ENCODE measurements at regions of chr3 and their contacts with region 1.

Region 1: DNA sequence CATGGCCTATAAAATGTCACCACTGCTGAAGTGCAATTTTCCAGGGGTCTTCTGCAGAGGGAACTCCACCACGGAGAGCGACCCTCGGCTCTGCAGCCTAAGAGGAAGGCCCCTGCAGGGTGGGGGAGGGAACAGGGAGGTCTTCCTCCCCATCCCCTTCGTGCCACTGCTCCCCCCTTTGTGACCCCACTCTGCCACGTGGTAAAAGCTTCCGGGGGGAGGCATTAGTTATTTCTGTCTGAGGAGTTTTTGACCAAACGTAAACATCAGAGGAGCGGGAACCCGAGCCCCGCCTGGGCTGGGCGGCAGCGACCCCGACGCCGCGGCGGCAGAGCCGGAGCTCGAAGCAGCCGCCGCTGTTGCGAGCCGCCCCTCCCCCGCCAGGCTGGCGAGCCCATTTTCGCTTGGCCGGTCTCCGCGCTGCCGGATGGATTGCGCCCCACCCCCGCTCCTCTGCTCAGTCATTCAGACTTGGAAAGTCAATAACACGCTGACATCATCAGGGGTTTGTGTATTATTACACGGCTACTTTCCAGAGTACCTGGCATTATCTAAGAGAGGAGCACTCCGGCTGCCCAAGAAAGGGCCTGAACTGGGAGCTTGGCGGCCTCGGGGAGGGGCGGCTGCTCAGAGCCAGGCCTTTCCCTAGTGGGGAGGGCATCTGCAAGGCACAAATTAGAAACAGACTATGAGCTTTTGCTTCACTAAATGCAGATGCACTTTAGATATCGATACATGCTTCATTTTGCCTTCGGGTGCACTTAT is 162.5 kb upstream of the TBL1XR1 start:
- DNase-seq: peak; percentile 90 to 97 (median 95)
- H3K4me3 ChIP-seq: peak overlapping the region; percentile 79
- H3K4me3 Mint-ChIP-seq: peak overlapping the region; percentile 90 to 98 (median 93)
- H3K27ac ChIP-seq: peak overlapping the region; percentile 87
- H3K27ac Mint-ChIP-seq: peak overlapping the region; percentile 96 to 100 (median 99)
- H3K4me1 ChIP-seq: peaks cover 41% of the 10 kb centered on the region
- H3K4me1 Mint-ChIP-seq: peaks cover 47 to 58% (median 58%) of the 10 kb centered on the region in 3 donors
- H3K27me3 ChIP-seq: no peaks in the 10 kb centered on the region
- H3K27me3 Mint-ChIP-seq: peaks cover 0 to 17% of the 10 kb centered on the region in 2 donors

Region 2: DNA sequence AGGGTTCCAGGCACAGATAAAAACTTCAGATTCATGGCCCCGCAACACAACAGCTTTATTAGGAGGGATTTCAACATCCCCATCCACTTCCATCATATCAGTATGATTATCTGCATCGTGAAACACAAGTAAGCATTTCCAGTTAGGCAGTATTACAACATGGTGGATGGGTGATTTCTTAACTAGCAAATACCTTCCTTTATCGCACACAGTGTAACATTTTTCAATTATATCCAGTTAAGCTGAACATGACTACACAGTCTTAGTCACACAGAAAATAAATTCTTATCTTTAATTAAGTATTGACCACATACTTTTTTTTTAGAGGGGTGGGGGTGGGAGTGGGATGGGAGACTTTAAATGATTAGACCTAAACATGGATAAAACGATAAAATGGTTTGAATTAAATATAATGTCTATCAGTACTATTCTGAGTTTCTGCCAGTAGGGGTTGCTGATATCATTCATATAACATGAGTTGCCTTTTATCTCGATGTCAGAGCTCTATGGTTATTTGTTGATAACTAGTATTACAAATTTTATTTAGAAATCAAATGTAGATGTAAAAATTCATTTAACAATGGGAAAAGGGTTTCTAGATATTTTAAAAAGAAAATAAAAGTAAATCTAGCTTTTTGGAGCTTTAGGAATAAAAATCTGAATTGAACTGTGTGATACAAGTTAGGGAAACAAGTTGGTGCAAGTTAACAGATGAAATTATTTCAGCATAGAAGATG is 309.1 kb before region 1 on chr3:
- CTCF ChIA-PET with region 1: interaction called, 26 read pairs
- POLR2A ChIA-PET with region 1: interaction called, 9 read pairs
- DNase-seq: peak in 2 of 5 donors; percentile 41 to 51
- H3K4me3 ChIP-seq: no peak overlapping the region
- H3K4me3 Mint-ChIP-seq: no peak overlapping the region
- H3K27ac ChIP-seq: no peak overlapping the region
- H3K27ac Mint-ChIP-seq: peak overlapping the region in 2 of 8 donors; percentile 46 to 63
- H3K4me1 ChIP-seq: peaks cover 10% of the 10 kb centered on the region
- H3K4me1 Mint-ChIP-seq: peaks cover 12 to 27% (median 18%) of the 10 kb centered on the region in 3 donors
- H3K27me3 ChIP-seq: no peaks in the 10 kb centered on the region
- H3K27me3 Mint-ChIP-seq: no peaks in the 10 kb centered on the region

Region 3: DNA sequence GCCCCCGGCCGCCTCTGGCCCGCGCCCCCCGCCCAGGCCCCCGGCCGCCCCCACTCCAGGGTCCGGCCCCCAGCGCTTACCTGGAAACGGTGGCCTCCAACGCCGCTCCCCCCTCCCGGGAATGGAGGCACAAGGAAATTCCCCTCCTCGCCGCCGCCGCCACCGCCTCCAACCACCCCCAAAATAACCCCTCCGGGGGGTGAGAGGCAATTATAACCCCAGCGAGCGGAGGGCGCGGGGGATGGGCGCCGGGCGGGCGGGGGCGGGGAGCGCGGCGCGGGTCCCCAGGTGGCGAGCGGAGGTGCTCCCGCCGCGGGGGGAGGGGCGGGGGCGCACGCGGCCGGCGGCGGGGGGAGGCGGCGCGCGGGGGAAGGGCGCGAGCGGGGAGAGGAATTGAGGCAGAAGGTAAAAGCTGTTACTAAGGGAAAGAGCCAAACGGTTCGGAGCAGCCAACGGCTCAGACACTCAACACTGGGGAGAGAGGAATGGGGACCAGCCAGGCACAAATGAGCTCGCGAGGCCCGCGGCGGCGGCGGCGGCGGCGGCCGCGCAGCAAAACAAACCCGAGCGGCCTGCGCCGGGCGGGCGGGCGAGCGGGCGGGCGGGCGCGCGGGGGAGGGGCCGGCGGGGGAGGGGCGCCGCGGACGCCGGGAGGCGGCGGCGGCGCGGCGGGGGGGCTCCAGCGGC is 162.6 kb before region 1 on chr3 and contains the start of gene TBL1XR1:
- CTCF ChIA-PET with region 1: interaction called, 49 read pairs
- POLR2A ChIA-PET with region 1: interaction called, 213 read pairs
- DNase-seq: peak; percentile 82 to 94 (median 90)
- H3K4me3 ChIP-seq: peak within 1 kb of the TSS; percentile 92
- H3K4me3 Mint-ChIP-seq: peak within 1 kb of the TSS; percentile 92 to 99 (median 98)
- H3K27ac ChIP-seq: peak within 1 kb of the TSS; percentile 80
- H3K27ac Mint-ChIP-seq: peak within 1 kb of the TSS; percentile 90 to 99 (median 98)
- H3K4me1 ChIP-seq: peaks cover 60% of the 10 kb centered on the region
- H3K4me1 Mint-ChIP-seq: peaks cover 60 to 73% (median 70%) of the 10 kb centered on the region in 3 donors
- H3K27me3 ChIP-seq: no peaks in the 10 kb centered on the region
- H3K27me3 Mint-ChIP-seq: peaks cover 0 to 7% of the 10 kb centered on the region in 2 donors
- total RNA-seq, gene TBL1XR1: 173 to 193 TPM

Region 4: GRCh38 chr3:177597311-177598096 is 237.7 kb after region 1 on chr3:
- CTCF ChIA-PET with region 1: interaction called, 14 read pairs
- POLR2A ChIA-PET with region 1: interaction called, 3 read pairs
- DNase-seq: peak in 4 of 5 donors; percentile 16 to 62 (median 51)
- H3K4me3 ChIP-seq: peak overlapping the region; percentile 7
- H3K4me3 Mint-ChIP-seq: peak overlapping the region; percentile 4 to 78 (median 72)
- H3K27ac ChIP-seq: peak overlapping the region; percentile 33
- H3K27ac Mint-ChIP-seq: peak overlapping the region; percentile 75 to 97 (median 94)
- H3K4me1 ChIP-seq: peaks cover 59% of the 10 kb centered on the region
- H3K4me1 Mint-ChIP-seq: peaks cover 81 to 91% (median 88%) of the 10 kb centered on the region in 3 donors
- H3K27me3 ChIP-seq: no peaks in the 10 kb centered on the region
- H3K27me3 Mint-ChIP-seq: no peaks in the 10 kb centered on the region

Region 5: GRCh38 chr3:177646749-177647148 is 287.0 kb after region 1 on chr3:
- CTCF ChIA-PET with region 1: interaction called, 13 read pairs
- POLR2A ChIA-PET with region 1: interaction called, 5 read pairs
- DNase-seq: peak in 4 of 5 donors; percentile 14 to 60 (median 29)
- H3K4me3 ChIP-seq: no peak overlapping the region
- H3K4me3 Mint-ChIP-seq: peak overlapping the region in 6 of 7 donors; percentile 21 to 75 (median 42)
- H3K27ac ChIP-seq: no peak overlapping the region
- H3K27ac Mint-ChIP-seq: peak overlapping the region; percentile 69 to 96 (median 84)
- H3K4me1 ChIP-seq: peaks cover 69% of the 10 kb centered on the region
- H3K4me1 Mint-ChIP-seq: peaks cover 78 to 88% (median 86%) of the 10 kb centered on the region in 3 donors
- H3K27me3 ChIP-seq: no peaks in the 10 kb centered on the region
- H3K27me3 Mint-ChIP-seq: peaks cover 0 to 2% of the 10 kb centered on the region in 2 donors

Region 6: GRCh38 chr3:177665122-177665808 is 305.5 kb after region 1 on chr3:
- CTCF ChIA-PET with region 1: interaction called, 12 read pairs
- POLR2A ChIA-PET with region 1: no interaction called
- DNase-seq: no peak
- H3K4me3 ChIP-seq: no peak overlapping the region
- H3K4me3 Mint-ChIP-seq: no peak overlapping the region
- H3K27ac ChIP-seq: no peak overlapping the region
- H3K27ac Mint-ChIP-seq: no peak overlapping the region
- H3K4me1 ChIP-seq: no peaks in the 10 kb centered on the region
- H3K4me1 Mint-ChIP-seq: peaks cover 0 to 17% (median 11%) of the 10 kb centered on the region in 3 donors
- H3K27me3 ChIP-seq: no peaks in the 10 kb centered on the region
- H3K27me3 Mint-ChIP-seq: no peaks in the 10 kb centered on the region

Region 7: DNA sequence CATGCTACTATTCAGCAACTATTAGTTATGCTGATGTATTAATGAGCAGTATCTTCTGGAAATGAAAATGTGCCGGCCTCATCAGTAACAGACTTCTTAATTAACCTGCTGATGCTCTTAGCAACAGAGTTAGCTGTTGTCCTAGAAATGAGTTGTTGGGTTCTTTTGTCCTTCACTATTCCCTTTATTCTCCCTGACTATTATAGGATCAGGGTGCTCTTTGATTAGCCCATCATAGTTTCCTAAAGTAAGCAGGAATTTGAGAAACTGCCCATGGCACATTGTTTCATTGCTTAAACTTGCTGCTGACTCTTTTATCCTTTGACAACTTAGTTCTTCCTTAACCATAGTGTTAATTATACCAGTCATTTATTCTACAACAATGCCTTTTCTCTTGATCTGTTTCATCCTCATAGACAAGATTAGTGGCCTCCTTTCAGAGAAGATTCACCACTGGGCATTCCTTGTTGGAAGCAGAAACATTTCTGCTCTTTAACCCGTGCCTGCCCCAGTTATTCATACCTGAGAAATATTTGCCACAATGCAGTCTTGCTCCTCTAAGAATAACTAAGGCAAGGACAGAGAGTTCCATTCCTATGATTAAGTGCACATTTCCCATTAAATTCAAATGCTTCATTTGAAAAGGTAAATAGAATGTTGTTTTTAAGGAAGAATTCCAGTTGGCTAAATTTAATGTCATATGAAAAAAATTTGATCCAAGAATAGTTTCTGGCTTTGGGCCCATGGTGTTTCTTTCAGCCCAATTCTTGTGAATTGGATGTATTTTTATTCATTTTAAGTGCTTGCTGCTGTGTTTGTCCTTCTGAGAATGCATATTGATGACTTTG is 410.8 kb after region 1 on chr3:
- CTCF ChIA-PET with region 1: no interaction called
- POLR2A ChIA-PET with region 1: no interaction called
- DNase-seq: no peak
- H3K4me3 ChIP-seq: no peak overlapping the region
- H3K4me3 Mint-ChIP-seq: no peak overlapping the region
- H3K27ac ChIP-seq: no peak overlapping the region
- H3K27ac Mint-ChIP-seq: no peak overlapping the region
- H3K4me1 ChIP-seq: no peaks in the 10 kb centered on the region
- H3K4me1 Mint-ChIP-seq: no peaks in the 10 kb centered on the region
- H3K27me3 ChIP-seq: no peaks in the 10 kb centered on the region
- H3K27me3 Mint-ChIP-seq: no peaks in the 10 kb centered on the region